IMR-90 (cell line): ENCODE measurements at regions of chr4 and their contacts with region 1.

Region 1: DNA sequence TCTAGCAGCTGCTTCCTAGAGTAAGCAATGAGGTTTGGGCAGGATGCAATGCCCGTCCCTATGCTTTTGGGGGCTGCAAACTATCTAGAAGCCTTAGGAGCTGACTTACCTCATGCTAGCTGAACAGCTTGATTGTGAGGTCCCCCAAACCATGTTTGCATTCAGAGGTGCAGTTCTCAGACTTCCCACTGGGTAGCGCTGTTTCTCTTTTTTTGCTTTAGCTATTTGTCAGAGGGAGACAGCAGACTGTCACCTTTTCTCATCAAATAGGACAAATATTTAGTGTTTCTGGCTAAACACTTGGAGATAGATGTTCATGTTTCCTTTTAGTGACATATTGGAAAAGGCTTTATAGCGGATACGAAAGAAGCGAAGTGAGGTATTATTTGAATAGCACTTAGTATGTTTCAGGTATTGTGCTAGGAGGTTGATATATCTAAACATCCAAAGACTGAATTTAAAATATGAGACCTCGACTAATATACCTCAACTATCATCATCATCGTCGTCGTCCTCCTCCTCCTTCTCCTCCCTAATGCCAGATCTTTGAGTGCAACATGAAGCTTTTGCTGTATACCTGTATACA is 18.7 kb upstream of the TMEM192 start:
- DNase-seq: peak; percentile 55
- ATAC-seq: peak; percentile 95
- H3K4me3 ChIP-seq: no peak overlapping the region
- H3K27ac ChIP-seq: no peak overlapping the region
- H3K4me1 ChIP-seq: no peaks in the 10 kb centered on the region
- H3K27me3 ChIP-seq: no peaks in the 10 kb centered on the region; the same call in 1 of the 2 replicates
- CTCF ChIP-seq: peak; percentile 85
- POLR2A ChIP-seq: no peak
- RAD21 ChIP-seq: peak; percentile 90

Region 2: DNA sequence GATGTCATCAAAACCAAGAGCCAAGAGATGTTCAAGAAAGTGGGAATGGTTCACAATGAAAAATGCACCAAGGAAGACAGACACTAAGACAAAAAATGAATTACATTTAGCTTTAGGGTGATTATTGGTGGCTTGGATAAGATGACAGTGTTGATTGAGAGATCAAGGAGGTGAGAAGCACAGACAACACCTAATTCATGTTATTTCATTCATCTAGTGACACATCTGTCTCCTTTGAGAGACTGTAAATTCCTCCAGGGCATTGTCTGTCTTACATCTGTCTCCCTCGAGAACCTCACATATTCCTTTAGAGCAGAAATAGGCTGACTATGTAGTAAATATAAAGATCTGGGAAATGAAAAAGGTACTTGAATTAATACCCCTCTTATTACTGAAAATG is 471.6 kb before region 1 on chr4:
- CTCF ChIA-PET with region 1: no interaction called
- POLR2A ChIA-PET with region 1: no interaction called
- dilution Hi-C with region 1: no loop called
- in situ Hi-C with region 1: no loop called
- intact Hi-C with region 1: no loop called
- DNase-seq: no peak
- ATAC-seq: no peak
- H3K4me3 ChIP-seq: no peak overlapping the region
- H3K27ac ChIP-seq: no peak overlapping the region
- H3K4me1 ChIP-seq: no peaks in the 10 kb centered on the region
- H3K27me3 ChIP-seq: no peaks in the 10 kb centered on the region
- CTCF ChIP-seq: no peak
- POLR2A ChIP-seq: no peak
- RAD21 ChIP-seq: no peak

Region 3: GRCh38 chr4:165027762-165028402 is 103.5 kb before region 1 on chr4:
- CTCF ChIA-PET with region 1: no interaction called
- POLR2A ChIA-PET with region 1: no interaction called
- dilution Hi-C with region 1: no loop called
- in situ Hi-C with region 1: no loop called
- intact Hi-C with region 1: no loop called
- DNase-seq: no peak
- ATAC-seq: no peak
- H3K4me3 ChIP-seq: no peak overlapping the region
- H3K27ac ChIP-seq: no peak overlapping the region
- H3K4me1 ChIP-seq: no peaks in the 10 kb centered on the region
- H3K27me3 ChIP-seq: no peaks in the 10 kb centered on the region
- CTCF ChIP-seq: no peak
- POLR2A ChIP-seq: no peak
- RAD21 ChIP-seq: no peak

Region 4: DNA sequence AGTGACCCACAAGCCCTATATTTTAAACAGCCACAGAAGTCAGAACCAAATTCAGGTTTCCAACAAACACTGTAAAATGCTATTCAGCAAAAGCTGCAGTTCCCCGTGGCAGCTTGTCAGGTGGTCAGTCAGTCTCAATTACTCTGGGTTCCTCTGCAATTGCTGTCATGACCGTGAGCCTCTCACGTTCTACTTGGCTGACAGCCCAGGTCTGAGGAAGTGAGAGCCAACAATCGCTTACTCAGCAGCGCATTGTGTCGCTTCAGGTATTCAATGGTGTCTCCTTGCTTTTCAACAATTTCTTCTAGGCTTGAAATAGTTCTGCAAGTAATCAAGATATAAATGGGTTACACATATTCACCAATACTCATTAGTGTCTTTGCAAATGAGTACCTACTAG is 51.9 kb before region 1 on chr4:
- CTCF ChIA-PET with region 1: no interaction called
- POLR2A ChIA-PET with region 1: no interaction called
- dilution Hi-C with region 1: no loop called
- in situ Hi-C with region 1: no loop called
- intact Hi-C with region 1: no loop called
- DNase-seq: peak; percentile 44
- ATAC-seq: no peak
- H3K4me3 ChIP-seq: no peak overlapping the region
- H3K27ac ChIP-seq: no peak overlapping the region
- H3K4me1 ChIP-seq: no peaks in the 10 kb centered on the region
- H3K27me3 ChIP-seq: no peaks in the 10 kb centered on the region
- CTCF ChIP-seq: no peak
- POLR2A ChIP-seq: no peak
- RAD21 ChIP-seq: no peak

Region 5: GRCh38 chr4:165248102-165248501 is 116.8 kb after region 1 on chr4:
- CTCF ChIA-PET with region 1: no interaction called
- POLR2A ChIA-PET with region 1: no interaction called
- dilution Hi-C with region 1: no loop called
- in situ Hi-C with region 1: no loop called
- intact Hi-C with region 1: no loop called
- DNase-seq: no peak
- ATAC-seq: no peak
- H3K4me3 ChIP-seq: no peak overlapping the region
- H3K27ac ChIP-seq: no peak overlapping the region
- H3K4me1 ChIP-seq: no peaks in the 10 kb centered on the region
- H3K27me3 ChIP-seq: no peaks in the 10 kb centered on the region
- CTCF ChIP-seq: no peak
- POLR2A ChIP-seq: no peak
- RAD21 ChIP-seq: no peak

Region 6: GRCh38 chr4:165343353-165344191 is 212.2 kb after region 1 on chr4:
- CTCF ChIA-PET with region 1: interaction called, 4 read pairs
- POLR2A ChIA-PET with region 1: no interaction called
- dilution Hi-C with region 1: no loop called
- in situ Hi-C with region 1: no loop called
- intact Hi-C with region 1: loop called (anchors 1 kb)
- DNase-seq: no peak
- ATAC-seq: no peak
- H3K4me3 ChIP-seq: no peak overlapping the region
- H3K27ac ChIP-seq: no peak overlapping the region
- H3K4me1 ChIP-seq: no peaks in the 10 kb centered on the region
- H3K27me3 ChIP-seq: no peaks in the 10 kb centered on the region
- CTCF ChIP-seq: 0 out of 2 replicates have a peak, but pooled peaks have one; percentile 34
- POLR2A ChIP-seq: no peak
- RAD21 ChIP-seq: peak; percentile 50

Region 7: DNA sequence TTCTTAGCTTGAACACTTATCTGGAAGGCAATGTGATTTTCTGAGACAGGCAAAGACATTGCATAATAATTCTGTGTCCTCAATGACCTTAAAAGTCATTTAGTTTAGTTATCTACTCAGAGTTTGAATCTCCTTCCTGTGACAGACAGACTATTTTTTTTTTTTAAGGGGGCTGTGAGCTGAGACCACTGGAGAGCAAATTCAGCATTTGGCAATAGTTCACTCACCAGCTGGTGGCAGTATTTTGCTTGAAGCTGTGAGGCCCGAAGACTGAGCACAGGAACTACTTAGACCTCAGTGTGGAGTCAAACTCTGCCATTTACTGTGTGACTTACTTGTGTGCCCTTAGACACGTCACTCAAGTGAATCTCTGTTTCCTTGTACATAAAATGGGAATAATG is 224.6 kb after region 1 on chr4:
- CTCF ChIA-PET with region 1: interaction called, 10 read pairs
- POLR2A ChIA-PET with region 1: no interaction called
- dilution Hi-C with region 1: no loop called
- in situ Hi-C with region 1: loop called (anchors 10 kb)
- intact Hi-C with region 1: no loop called
- DNase-seq: peak; percentile 20
- ATAC-seq: peak; percentile 51; the same call in 1 of the 2 replicates
- H3K4me3 ChIP-seq: no peak overlapping the region
- H3K27ac ChIP-seq: no peak overlapping the region
- H3K4me1 ChIP-seq: no peaks in the 10 kb centered on the region
- H3K27me3 ChIP-seq: 0 out of 2 replicates have a peak, but pooled peaks cover 1% of the 10 kb centered on the region
- CTCF ChIP-seq: peak; percentile 36
- POLR2A ChIP-seq: no peak
- RAD21 ChIP-seq: peak; percentile 20; the same call in 1 of the 2 replicates

Region 8: DNA sequence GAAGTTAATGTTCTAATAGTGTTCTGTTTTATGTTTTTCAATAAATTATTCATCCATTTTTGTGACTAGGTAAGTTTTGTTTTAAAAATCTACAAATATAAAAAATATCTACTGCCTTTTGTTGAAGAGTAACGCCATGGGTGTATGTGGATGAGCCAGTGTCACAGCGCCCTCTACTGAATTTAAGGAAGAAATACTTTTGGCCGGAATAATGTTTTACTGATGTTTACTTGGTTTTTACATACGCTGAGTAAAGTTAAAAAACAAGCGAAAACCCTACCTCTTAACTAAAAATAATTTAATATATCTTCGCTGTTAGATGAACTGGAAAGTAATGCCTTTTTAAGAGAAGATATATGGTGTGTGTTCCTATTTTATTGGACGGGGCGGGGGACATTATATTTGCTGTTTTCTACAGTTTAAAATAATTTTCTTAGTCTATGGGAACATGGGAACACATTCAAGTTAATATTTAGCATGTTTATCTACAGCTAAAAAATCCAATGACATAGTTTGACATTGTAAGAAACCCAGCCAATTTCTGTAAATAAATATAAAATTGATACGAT is 333.6 kb after region 1 on chr4:
- CTCF ChIA-PET with region 1: interaction called, 8 read pairs
- POLR2A ChIA-PET with region 1: no interaction called
- dilution Hi-C with region 1: loop called (anchors 25 kb)
- in situ Hi-C with region 1: loop called (anchors 5 kb)
- intact Hi-C with region 1: loop called (anchors 1 kb)
- DNase-seq: peak; percentile 48
- ATAC-seq: peak; percentile 53
- H3K4me3 ChIP-seq: no peak overlapping the region
- H3K27ac ChIP-seq: no peak overlapping the region
- H3K4me1 ChIP-seq: no peaks in the 10 kb centered on the region; the same call in 1 of the 2 replicates
- H3K27me3 ChIP-seq: no peaks in the 10 kb centered on the region
- CTCF ChIP-seq: peak; percentile 88
- POLR2A ChIP-seq: no peak
- RAD21 ChIP-seq: peak; percentile 92

Region 9: DNA sequence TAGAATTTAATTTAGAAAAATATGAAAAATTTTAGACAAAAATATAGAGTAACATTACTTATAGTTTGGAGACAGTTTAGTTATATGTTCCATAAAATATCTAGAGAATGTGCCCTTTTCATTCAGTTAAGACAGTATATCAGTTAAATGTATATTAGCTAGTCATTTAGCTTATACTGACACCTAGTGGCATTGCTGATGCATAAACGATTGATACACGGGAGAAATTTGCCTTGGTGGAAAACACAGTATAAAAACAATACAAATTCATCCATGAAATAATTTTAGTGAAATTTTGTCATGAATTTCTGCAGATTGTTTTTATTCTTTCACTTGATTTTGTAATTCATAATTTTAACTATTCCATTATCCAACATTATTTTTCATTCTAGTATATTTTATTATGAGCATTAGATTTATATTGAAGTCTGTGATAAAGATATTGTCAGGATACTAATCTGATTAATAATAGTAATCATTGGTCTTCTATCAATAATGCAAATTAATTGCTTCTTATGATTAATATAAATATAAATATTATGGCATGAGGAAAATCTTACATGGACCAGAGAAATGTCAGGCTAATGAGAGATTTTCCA is 960.7 kb after region 1 on chr4:
- CTCF ChIA-PET with region 1: no interaction called
- POLR2A ChIA-PET with region 1: no interaction called
- dilution Hi-C with region 1: no loop called
- in situ Hi-C with region 1: loop called (anchors 25 kb)
- intact Hi-C with region 1: no loop called
- DNase-seq: peak; percentile 29
- ATAC-seq: peak; percentile 54
- H3K4me3 ChIP-seq: no peak overlapping the region
- H3K27ac ChIP-seq: no peak overlapping the region
- H3K4me1 ChIP-seq: no peaks in the 10 kb centered on the region
- H3K27me3 ChIP-seq: no peaks in the 10 kb centered on the region
- CTCF ChIP-seq: peak; percentile 66
- POLR2A ChIP-seq: no peak
- RAD21 ChIP-seq: peak; percentile 63